ENCODE measurements at regions of chr4 and their contacts with region 1.

Region 1: DNA sequence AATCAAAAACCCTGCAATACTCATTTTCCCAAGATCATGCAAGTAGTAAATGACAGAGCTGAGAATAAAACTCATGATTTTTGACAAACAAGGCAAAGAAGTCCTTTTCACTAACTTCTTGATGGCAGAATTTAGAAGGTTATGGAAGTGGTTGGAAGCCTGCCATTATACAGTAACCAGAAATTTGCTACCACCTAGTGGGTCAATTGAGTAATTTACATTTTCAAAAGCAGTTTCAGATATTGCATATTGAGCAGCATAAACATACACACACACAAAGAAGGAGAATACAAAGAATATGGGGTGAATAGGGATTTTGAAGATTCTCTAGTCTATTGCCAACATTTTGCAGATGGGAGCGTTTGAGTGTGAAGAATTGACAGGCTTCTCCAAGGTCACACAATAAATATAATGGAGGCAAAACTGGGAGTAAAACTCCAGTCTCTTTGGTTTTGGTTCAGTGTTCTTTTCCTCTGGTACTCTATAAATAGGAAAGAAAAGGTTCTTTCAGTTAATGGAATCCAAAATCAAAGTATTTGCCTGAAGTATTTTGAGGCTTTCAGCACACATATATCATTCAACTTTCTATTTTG is 70.2 kb downstream of the GC start:
- DNase-seq: peak; percentile 16
- ATAC-seq: peak; percentile 44; the same call in 1 of the 2 replicates
- H3K4me3 ChIP-seq: no peak overlapping the region
- H3K27ac ChIP-seq: no peak overlapping the region
- H3K4me1 ChIP-seq: no peaks in the 10 kb centered on the region
- H3K27me3 ChIP-seq: no peaks in the 10 kb centered on the region
- CTCF ChIP-seq: peak; percentile 43 to 71 (median 47); a peak in 5 of 6 replicates
- POLR2A ChIP-seq: no peak
- RAD21 ChIP-seq: peak; percentile 71

Region 2: DNA sequence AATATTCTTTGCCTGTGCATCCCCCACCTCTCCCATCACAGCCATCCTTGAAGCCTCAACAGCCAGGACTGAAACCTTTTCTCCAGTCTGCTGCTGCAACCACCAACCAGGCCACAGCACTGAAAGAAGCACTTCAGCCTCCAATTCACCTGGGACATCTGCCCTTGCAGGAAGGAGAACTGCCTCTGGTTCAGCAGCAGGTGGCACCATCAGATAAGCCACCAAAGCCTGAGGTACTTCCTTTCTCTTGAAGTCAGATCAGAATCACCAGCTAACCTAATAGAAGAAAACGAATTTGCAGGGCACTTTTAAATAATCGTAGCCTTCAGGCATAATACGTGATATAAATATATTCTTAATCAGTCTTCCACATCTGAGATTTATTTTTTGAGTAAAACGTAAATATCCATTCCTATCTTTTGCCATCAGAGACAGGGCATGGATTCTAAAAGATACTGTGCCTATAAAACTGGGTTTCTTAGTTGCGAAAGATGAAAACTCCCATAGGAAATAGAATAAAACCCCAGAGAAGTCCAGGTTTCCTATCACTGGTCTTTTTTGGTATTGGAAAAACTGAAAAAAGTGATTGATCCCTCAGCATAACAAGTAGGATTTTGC is 1112.2 kb before region 1 on chr4:
- CTCF ChIA-PET with region 1: interaction called, 4 read pairs
- POLR2A ChIA-PET with region 1: no interaction called
- RAD21 ChIA-PET with region 1: no interaction called
- intact Hi-C with region 1: loop called (anchors 1 kb)
- DNase-seq: peak; percentile 79
- ATAC-seq: peak; percentile 99
- H3K4me3 ChIP-seq: no peak overlapping the region
- H3K27ac ChIP-seq: no peak overlapping the region
- H3K4me1 ChIP-seq: no peaks in the 10 kb centered on the region
- H3K27me3 ChIP-seq: no peaks in the 10 kb centered on the region
- CTCF ChIP-seq: peak; percentile 75 to 94 (median 93)
- POLR2A ChIP-seq: no peak
- RAD21 ChIP-seq: peak; percentile 92

Region 3: GRCh38 chr4:70651864-70652506 is 1061.7 kb before region 1 on chr4:
- CTCF ChIA-PET with region 1: no interaction called
- POLR2A ChIA-PET with region 1: no interaction called
- RAD21 ChIA-PET with region 1: no interaction called
- intact Hi-C with region 1: loop called (anchors 2 kb)
- DNase-seq: peak; percentile 52
- ATAC-seq: peak; percentile 83
- H3K4me3 ChIP-seq: peak overlapping the region; percentile 24 to 54
- H3K27ac ChIP-seq: no peak overlapping the region
- H3K4me1 ChIP-seq: peaks cover 3 to 5% of the 10 kb centered on the region in 2 experiments; a peak in 2 of 4 replicates
- H3K27me3 ChIP-seq: no peaks in the 10 kb centered on the region
- CTCF ChIP-seq: peak; percentile 26 to 74 (median 61); a peak in 4 of 6 replicates
- POLR2A ChIP-seq: no peak
- RAD21 ChIP-seq: peak; percentile 78

Region 4: DNA sequence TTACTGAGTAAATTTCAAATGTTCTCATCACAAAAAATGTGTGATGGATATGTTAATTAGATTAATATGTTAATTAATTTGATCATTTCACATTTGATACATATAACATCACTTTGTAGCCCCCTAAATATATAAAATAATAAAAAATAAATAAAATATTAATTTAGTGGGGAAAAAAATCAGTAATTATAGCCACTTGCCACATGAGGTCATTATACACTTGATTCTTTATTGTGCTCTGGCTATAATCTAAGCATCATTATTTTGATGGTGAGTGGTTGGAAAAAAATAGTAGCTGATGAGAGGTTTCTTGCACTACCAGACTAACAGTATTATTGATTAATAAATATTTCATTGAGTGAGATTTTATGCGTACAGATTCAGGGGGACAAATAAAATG is 662.9 kb before region 1 on chr4:
- CTCF ChIA-PET with region 1: no interaction called
- POLR2A ChIA-PET with region 1: no interaction called
- RAD21 ChIA-PET with region 1: no interaction called
- intact Hi-C with region 1: loop called (anchors 2 kb)
- DNase-seq: no peak
- ATAC-seq: no peak
- H3K4me3 ChIP-seq: no peak overlapping the region
- H3K27ac ChIP-seq: no peak overlapping the region
- H3K4me1 ChIP-seq: no peaks in the 10 kb centered on the region
- H3K27me3 ChIP-seq: no peaks in the 10 kb centered on the region
- CTCF ChIP-seq: peak in 1 of 3 experiments; percentile 12; a peak in 1 of 6 replicates
- POLR2A ChIP-seq: no peak
- RAD21 ChIP-seq: peak; percentile 34; the same call in 1 of the 2 replicates

Region 5: GRCh38 chr4:71184195-71184781 is 529.4 kb before region 1 on chr4:
- CTCF ChIA-PET with region 1: interaction called, 4 read pairs
- POLR2A ChIA-PET with region 1: no interaction called
- RAD21 ChIA-PET with region 1: no interaction called
- intact Hi-C with region 1: loop called (anchors 5 kb)
- DNase-seq: peak; percentile 63
- ATAC-seq: peak; percentile 51
- H3K4me3 ChIP-seq: no peak overlapping the region
- H3K27ac ChIP-seq: no peak overlapping the region
- H3K4me1 ChIP-seq: peaks cover 0 to 5% of the 10 kb centered on the region in 2 experiments; a peak in 1 of 4 replicates
- H3K27me3 ChIP-seq: peaks cover 15% of the 10 kb centered on the region; the same call in 1 of the 2 replicates
- CTCF ChIP-seq: peak; percentile 28 to 69 (median 57); a peak in 5 of 6 replicates
- POLR2A ChIP-seq: no peak
- RAD21 ChIP-seq: peak; percentile 54

Region 6: DNA sequence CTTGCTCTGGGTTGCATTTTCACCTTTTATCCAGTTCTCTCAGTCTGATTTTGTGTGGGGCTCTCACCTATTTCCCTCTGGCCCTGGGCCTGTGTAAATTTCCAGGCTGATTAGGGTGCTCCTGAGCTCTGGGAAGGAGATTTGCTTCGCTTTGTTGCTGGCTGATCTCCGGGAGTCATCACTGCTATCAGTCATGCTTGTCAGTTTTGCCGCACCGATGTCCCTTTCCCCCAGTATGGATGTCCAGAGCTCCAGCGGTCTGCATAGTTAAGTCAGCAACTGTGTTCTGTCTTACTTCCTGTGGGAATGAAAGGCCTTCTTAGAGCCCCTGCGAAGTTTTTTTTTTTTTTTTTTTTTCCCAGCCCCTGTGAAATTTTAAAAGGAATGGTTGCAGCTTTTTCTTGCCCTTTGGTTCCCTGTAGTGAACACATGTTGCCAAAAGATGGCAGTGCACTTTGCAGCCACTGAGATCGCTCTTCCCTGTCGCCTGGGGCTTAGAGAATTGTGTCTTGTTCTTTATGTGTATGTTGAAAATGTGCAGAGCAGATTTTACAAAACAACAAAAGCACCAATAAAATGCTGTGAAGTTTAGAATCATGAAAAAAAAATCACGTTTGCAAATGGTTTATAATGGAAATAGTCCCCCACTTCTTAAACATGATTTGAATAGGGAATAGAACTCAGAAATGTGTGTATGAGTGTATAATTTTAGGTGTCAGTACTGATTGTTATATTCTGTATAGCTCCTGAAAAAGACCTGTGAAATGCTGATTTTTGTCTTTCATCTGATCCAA is 484.0 kb before region 1 on chr4:
- CTCF ChIA-PET with region 1: no interaction called
- POLR2A ChIA-PET with region 1: no interaction called
- RAD21 ChIA-PET with region 1: no interaction called
- intact Hi-C with region 1: loop called (anchors 5 kb)
- DNase-seq: peak; percentile 7
- ATAC-seq: peak; percentile 85
- H3K4me3 ChIP-seq: no peak overlapping the region
- H3K27ac ChIP-seq: no peak overlapping the region
- H3K4me1 ChIP-seq: no peaks in the 10 kb centered on the region
- H3K27me3 ChIP-seq: peaks cover 11% of the 10 kb centered on the region; the same call in 1 of the 2 replicates
- CTCF ChIP-seq: peak; percentile 26 to 74 (median 69); a peak in 5 of 6 replicates
- POLR2A ChIP-seq: no peak
- RAD21 ChIP-seq: peak; percentile 53

Region 7: DNA sequence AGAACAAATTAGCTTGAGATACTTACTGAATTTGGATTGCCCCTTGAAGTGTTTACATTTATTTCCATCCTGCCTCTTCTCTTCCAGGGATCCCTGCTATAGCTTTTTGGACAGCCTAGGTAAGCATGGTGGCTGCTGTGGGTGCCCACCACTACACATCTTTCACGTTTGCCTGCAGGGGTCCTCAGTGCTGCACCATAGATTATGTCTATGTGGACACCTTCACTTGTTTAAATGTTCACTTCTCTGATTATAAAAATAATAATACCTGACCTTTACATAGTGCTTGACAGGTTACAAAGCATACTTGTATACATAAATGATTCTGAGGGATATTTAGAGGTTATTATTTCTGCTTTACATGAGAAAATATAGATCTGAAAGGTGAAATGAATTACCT is 442.8 kb before region 1 on chr4:
- CTCF ChIA-PET with region 1: no interaction called
- POLR2A ChIA-PET with region 1: no interaction called
- RAD21 ChIA-PET with region 1: no interaction called
- intact Hi-C with region 1: loop called (anchors 2 kb)
- DNase-seq: peak; percentile 8
- ATAC-seq: peak; percentile 79
- H3K4me3 ChIP-seq: no peak overlapping the region
- H3K27ac ChIP-seq: no peak overlapping the region
- H3K4me1 ChIP-seq: no peaks in the 10 kb centered on the region
- H3K27me3 ChIP-seq: no peaks in the 10 kb centered on the region; the same call in 1 of the 2 replicates
- CTCF ChIP-seq: peak in 2 of 3 experiments; percentile 33 to 53; a peak in 4 of 6 replicates
- POLR2A ChIP-seq: no peak
- RAD21 ChIP-seq: peak; percentile 48

Region 8: GRCh38 chr4:71648448-71648847 is 65.3 kb before region 1 on chr4:
- CTCF ChIA-PET with region 1: no interaction called
- POLR2A ChIA-PET with region 1: no interaction called
- RAD21 ChIA-PET with region 1: no interaction called
- intact Hi-C with region 1: no loop called
- DNase-seq: no peak
- ATAC-seq: no peak
- H3K4me3 ChIP-seq: no peak overlapping the region
- H3K27ac ChIP-seq: no peak overlapping the region
- H3K4me1 ChIP-seq: no peaks in the 10 kb centered on the region
- H3K27me3 ChIP-seq: no peaks in the 10 kb centered on the region
- CTCF ChIP-seq: no peak
- POLR2A ChIP-seq: no peak
- RAD21 ChIP-seq: no peak

Region 9: GRCh38 chr4:71752383-71753042 is 38.8 kb after region 1 on chr4:
- CTCF ChIA-PET with region 1: no interaction called
- POLR2A ChIA-PET with region 1: no interaction called
- RAD21 ChIA-PET with region 1: no interaction called
- intact Hi-C with region 1: no loop called
- DNase-seq: no peak
- ATAC-seq: no peak
- H3K4me3 ChIP-seq: no peak overlapping the region
- H3K27ac ChIP-seq: no peak overlapping the region
- H3K4me1 ChIP-seq: no peaks in the 10 kb centered on the region
- H3K27me3 ChIP-seq: no peaks in the 10 kb centered on the region
- CTCF ChIP-seq: no peak
- POLR2A ChIP-seq: no peak
- RAD21 ChIP-seq: no peak